Panc1 (cell line): ENCODE measurements at regions of chr6 and their contacts with region 1.

Region 1: GRCh38 chr6:23690453-23691430 is 435.3 kb upstream of the NRSN1 start:
- DNase-seq: no peak
- ATAC-seq: no peak
- H3K4me3 ChIP-seq: no peak overlapping the region
- H3K27ac ChIP-seq: no peak overlapping the region
- H3K4me1 ChIP-seq: no peaks in the 10 kb centered on the region
- H3K27me3 ChIP-seq: no peaks in the 10 kb centered on the region
- CTCF ChIP-seq: no peak

Region 2: DNA sequence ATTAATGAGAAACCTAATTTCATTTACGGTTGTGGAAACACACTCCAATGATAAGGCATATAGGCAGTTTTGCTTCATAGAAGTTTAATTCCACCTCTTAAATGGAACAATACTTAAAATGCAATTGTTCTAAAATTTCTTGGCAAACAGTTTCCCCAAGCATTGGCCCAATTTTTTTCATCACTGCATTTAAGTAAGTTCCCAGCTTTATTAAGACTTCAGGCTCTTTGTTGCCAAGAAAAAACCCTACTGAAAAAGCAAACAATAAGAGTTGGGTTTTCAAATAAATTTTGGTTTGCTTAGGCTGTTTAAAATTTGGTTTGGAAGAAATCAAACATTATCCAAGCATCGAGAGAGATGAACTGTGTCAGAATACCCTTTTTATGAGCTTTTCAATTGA is 255.6 kb before region 1 on chr6:
- CTCF ChIA-PET with region 1: interaction called, 10 read pairs
- POLR2A ChIA-PET with region 1: no interaction called
- in situ Hi-C with region 1: no loop called
- intact Hi-C with region 1: no loop called
- DNase-seq: no peak
- ATAC-seq: no peak
- H3K4me3 ChIP-seq: no peak overlapping the region
- H3K27ac ChIP-seq: no peak overlapping the region
- H3K4me1 ChIP-seq: no peaks in the 10 kb centered on the region
- H3K27me3 ChIP-seq: no peaks in the 10 kb centered on the region
- CTCF ChIP-seq: no peak